ENCODE measurements at regions of chrX and their contacts with region 1.

Region 1: GRCh38 chrX:15849555-15849954 is 5.1 kb downstream of the AP1S2 start:
- DNase-seq: peak; percentile 24
- H3K4me3 Mint-ChIP-seq: peak overlapping the region; percentile 7
- H3K27ac Mint-ChIP-seq: peak overlapping the region; percentile 36
- H3K4me1 Mint-ChIP-seq: peaks cover 33% of the 10 kb centered on the region
- H3K27me3 Mint-ChIP-seq: no peaks in the 10 kb centered on the region
- CTCF ChIP-seq: no peak

Region 2: DNA sequence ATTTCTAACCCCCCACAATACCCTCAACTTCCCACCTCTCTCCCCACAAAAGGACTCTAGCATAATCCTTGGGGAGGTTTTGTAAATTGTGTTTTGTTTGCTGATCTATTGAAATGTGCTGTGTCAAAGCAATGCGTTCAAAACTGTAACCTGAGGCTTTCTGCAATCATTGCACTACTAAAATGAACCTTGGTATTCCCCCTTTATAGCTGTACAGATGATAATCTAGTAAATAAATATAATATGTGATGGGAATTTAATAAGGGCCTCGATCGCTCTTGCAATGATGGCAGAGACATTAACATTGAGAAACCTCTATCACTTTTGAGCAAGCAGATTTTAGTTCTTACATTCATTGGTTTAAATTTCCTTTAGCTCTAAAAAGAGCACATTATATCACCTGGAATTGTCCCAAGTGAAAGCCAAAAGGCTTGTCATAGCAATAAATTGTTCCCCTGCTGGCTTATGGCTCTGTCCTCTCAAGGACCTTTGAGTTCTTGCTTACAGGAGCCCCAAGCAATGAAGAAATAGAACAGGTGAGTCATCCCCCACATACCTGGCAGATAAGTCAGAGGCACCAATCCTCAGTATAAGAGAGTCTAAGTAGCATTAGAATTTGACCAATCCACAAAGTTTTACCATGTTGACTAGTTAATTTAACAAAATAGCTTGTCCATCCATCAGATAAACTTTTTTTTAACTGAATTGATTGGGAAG is 230.3 kb before region 1 on chrX:
- CTCF ChIA-PET with region 1: no interaction called
- intact Hi-C with region 1: no loop called
- DNase-seq: peak; percentile 72
- H3K4me3 Mint-ChIP-seq: no peak overlapping the region
- H3K27ac Mint-ChIP-seq: peak overlapping the region; percentile 71
- H3K4me1 Mint-ChIP-seq: peaks cover 32% of the 10 kb centered on the region
- H3K27me3 Mint-ChIP-seq: no peaks in the 10 kb centered on the region
- CTCF ChIP-seq: no peak

Region 3: DNA sequence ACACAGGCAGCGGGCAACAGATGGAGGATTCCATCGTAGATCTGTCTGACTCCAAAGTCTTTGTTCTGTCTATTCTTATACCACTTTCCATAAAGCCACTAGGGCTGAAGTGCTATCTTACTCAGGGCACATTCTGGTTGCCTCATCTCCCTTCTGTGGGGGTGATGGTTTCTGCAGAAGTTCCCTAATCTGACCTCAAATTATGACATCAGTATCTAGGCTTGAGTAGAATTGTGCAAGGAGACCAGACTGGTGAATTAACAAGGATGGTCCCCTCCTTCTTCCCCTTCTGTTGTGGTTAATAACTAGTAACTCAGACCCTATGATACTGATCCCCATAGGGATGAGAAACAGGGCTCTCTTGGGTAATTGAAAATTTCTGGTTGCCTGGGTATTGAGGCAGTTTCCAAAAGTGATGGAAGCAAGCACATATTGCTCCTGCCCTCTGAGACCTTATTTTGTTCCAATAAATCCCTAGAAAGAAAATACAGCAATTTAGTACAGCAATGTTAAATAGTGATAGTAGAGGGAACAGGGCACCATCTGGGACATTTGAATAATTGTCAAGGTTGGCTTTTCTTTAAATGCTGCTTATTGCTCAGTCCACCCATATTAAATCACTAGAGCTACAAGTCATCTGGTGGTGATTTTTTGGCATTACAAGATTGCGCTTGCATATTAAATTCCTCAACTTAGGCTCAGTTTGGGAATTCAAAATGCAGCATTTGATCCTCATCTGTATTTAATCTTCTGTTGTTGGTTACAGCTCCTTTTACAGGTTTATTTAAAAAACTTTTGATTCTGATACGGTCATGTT is 62.4 kb after region 1 on chrX:
- CTCF ChIA-PET with region 1: no interaction called
- intact Hi-C with region 1: loop called (anchors 1 kb)
- DNase-seq: no peak
- H3K4me3 Mint-ChIP-seq: no peak overlapping the region
- H3K27ac Mint-ChIP-seq: no peak overlapping the region
- H3K4me1 Mint-ChIP-seq: no peaks in the 10 kb centered on the region
- H3K27me3 Mint-ChIP-seq: no peaks in the 10 kb centered on the region
- CTCF ChIP-seq: no peak